Mucosa of descending colon (tissue), 3 donors: ENCODE measurements at regions of chr12 and their contacts with region 1.

Region 1: DNA sequence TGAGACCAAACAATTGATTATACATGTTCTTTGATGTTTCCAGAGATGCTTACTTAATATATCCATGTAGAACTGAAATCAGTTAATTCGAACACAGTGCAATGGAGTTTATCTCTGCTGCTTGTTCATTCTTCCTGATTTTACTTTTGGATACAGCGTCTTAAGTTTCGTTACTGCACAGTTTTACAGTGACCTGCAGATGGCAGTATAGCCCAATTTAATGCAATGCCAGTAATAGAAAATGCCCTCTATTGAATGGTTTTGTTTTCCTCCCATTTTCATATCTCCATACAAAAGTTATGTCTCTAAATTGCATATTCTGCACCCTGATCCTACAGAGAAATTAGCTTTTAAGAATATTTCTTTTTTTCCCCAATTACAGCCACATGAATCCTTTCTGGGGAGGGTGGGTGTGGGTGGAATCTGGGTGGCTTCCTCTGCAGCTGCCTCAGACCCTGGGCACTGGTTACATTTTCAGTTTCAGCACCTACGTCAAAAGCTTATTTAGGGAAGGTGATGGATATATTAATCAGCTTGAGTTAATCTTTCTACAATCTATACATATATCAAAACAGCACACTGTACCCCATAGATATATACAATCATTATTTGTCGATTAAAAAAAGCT is 101.1 kb upstream of the DCD start:
- DNase-seq: peak in 1 of 3 donors; percentile 19
- ATAC-seq: peak; percentile 59
- H3K4me3 ChIP-seq: no peak overlapping the region
- H3K4me1 ChIP-seq: no peaks in the 10 kb centered on the region
- CTCF ChIP-seq: peak; percentile 22

Region 2: DNA sequence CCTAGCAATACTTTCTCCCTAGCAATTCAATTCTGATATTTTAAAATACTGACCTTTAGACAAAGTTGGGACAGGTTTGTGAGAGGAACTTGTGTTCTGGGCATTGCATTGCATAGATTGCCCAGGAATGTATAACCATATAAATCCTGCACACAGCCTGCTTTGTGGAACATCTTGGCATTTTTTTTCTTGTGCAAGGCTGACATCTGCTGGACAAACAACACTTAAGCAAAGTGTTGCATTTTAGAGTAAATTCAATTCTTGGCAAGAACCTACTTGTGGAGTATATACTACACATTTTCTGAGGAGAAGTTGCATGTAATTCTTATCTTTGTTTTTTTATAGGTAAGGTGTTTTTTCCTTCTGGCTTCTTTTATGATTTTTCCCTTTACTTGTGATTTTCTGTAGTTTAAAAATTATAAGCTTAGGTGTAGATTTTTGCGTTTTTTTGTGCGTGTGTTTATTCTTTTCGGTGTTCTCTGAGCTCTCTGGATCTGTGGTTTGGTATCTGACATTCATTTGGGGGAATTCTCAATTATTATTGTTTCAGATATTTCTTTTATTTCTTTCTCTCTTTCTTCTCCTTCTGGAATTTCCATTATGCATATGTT is 208.8 kb after region 1 on chr12:
- intact Hi-C with region 1: loop called in 1 of 2 experiments (anchors 5 kb)
- DNase-seq: peak in 1 of 3 donors; percentile 70
- ATAC-seq: peak; percentile 51
- H3K4me3 ChIP-seq: no peak overlapping the region
- H3K4me1 ChIP-seq: no peaks in the 10 kb centered on the region
- CTCF ChIP-seq: no peak